ENCODE measurements at regions of chr2 and their contacts with region 1.

Region 1: DNA sequence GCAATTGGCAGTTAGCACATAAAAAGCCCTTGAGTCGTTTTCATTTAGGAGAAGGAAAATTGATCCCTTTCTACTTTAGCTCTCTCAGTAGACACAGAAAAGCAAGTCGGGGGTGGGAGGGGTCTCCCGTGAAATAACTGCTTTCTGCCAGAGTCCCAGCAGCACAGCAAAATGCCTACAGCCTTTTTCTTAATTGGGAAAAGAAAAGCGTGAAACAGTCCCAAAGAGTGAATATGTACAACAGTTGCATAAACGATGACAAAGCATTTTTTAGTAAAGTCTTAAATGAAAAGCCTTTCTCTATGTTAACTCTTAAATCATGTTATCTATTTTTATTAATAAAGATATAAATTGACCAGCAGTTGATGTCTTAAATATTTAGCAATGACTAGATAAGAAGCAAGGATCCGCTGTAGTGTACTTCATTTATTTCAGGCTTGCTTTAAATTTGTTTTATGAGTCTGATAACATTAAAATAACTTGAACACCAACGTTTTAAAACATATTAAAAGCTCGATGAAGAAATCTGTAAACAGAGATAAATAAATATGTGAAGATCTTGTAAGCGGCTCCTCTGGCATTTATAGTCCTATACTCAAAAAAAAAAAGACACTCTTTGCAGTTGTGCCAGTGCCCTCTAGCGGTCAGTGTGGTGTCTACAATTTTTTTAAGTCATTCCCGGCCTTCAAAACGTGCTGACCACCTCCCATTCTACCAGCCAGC is 42.3 kb upstream of the ATIC start:
- DNase-seq: peak in 8 of 9 donors; percentile 21 to 59 (median 38)
- ATAC-seq: peak; percentile 81
- H3K4me3 ChIP-seq: no peak overlapping the region
- H3K4me3 Mint-ChIP-seq: no peak overlapping the region
- H3K27ac ChIP-seq: no peak overlapping the region
- H3K27ac Mint-ChIP-seq: no peak overlapping the region
- H3K4me1 ChIP-seq: no peaks in the 10 kb centered on the region
- H3K4me1 Mint-ChIP-seq: peaks cover 0 to 4% (median 0%) of the 10 kb centered on the region in 7 donors
- H3K27me3 ChIP-seq: no peaks in the 10 kb centered on the region
- H3K27me3 Mint-ChIP-seq: peaks cover 0 to 6% (median 3%) of the 10 kb centered on the region in 5 donors

Region 2: GRCh38 chr2:213806125-213806726 is 1463.3 kb before region 1 on chr2:
- CTCF ChIA-PET with region 1: no interaction called
- POLR2A ChIA-PET with region 1: no interaction called
- intact Hi-C with region 1: loop called in 1 of 2 experiments (anchors 2 kb)
- DNase-seq: no peak
- ATAC-seq: no peak
- H3K4me3 ChIP-seq: no peak overlapping the region
- H3K4me3 Mint-ChIP-seq: no peak overlapping the region
- H3K27ac ChIP-seq: no peak overlapping the region
- H3K27ac Mint-ChIP-seq: no peak overlapping the region
- H3K4me1 ChIP-seq: no peaks in the 10 kb centered on the region
- H3K4me1 Mint-ChIP-seq: no peaks in the 10 kb centered on the region
- H3K27me3 ChIP-seq: no peaks in the 10 kb centered on the region
- H3K27me3 Mint-ChIP-seq: peaks cover 0 to 7% (median 0%) of the 10 kb centered on the region in 5 donors

Region 3: GRCh38 chr2:215249501-215249900 is 20.1 kb before region 1 on chr2:
- CTCF ChIA-PET with region 1: no interaction called
- POLR2A ChIA-PET with region 1: no interaction called
- intact Hi-C with region 1: no loop called
- DNase-seq: no peak
- ATAC-seq: no peak
- H3K4me3 ChIP-seq: no peak overlapping the region
- H3K4me3 Mint-ChIP-seq: no peak overlapping the region
- H3K27ac ChIP-seq: no peak overlapping the region
- H3K27ac Mint-ChIP-seq: no peak overlapping the region
- H3K4me1 ChIP-seq: no peaks in the 10 kb centered on the region
- H3K4me1 Mint-ChIP-seq: no peaks in the 10 kb centered on the region
- H3K27me3 ChIP-seq: no peaks in the 10 kb centered on the region
- H3K27me3 Mint-ChIP-seq: peaks cover 0 to 21% (median 18%) of the 10 kb centered on the region in 5 donors

Region 4: DNA sequence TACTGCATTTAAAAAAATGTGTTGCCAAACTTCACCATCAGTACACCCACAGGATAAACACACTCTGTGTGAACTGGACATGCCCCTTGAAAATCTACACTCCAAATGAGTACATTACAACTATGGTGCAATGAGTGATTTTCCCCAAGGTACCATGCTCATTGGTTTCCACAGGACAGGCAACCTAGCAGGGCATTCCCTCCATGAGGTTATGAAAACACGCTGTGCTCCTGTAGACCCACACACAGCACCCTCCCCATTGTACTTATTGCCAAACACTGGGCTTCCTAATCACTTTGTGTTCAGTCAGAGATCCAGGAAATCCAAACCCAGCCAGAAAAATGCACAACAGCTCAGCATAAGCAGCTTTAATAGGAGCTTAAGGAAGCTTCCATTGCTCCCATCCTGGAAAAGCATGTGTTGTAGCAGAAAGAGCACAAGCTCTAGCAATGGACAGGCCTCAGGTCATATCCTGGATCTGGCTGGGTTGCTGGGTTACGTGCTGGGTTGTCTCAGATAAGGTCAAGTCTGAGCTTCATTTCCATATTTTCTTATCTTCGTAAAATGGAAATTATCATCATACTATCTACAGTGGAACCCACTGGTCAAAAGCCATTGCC is 21.5 kb after region 1 on chr2:
- CTCF ChIA-PET with region 1: no interaction called
- POLR2A ChIA-PET with region 1: no interaction called
- intact Hi-C with region 1: no loop called
- DNase-seq: no peak
- ATAC-seq: no peak
- H3K4me3 ChIP-seq: no peak overlapping the region
- H3K4me3 Mint-ChIP-seq: no peak overlapping the region
- H3K27ac ChIP-seq: no peak overlapping the region
- H3K27ac Mint-ChIP-seq: no peak overlapping the region
- H3K4me1 ChIP-seq: no peaks in the 10 kb centered on the region
- H3K4me1 Mint-ChIP-seq: peaks cover 0 to 6% (median 0%) of the 10 kb centered on the region in 7 donors
- H3K27me3 ChIP-seq: no peaks in the 10 kb centered on the region
- H3K27me3 Mint-ChIP-seq: peaks cover 0 to 11% (median 5%) of the 10 kb centered on the region in 5 donors

Region 5: DNA sequence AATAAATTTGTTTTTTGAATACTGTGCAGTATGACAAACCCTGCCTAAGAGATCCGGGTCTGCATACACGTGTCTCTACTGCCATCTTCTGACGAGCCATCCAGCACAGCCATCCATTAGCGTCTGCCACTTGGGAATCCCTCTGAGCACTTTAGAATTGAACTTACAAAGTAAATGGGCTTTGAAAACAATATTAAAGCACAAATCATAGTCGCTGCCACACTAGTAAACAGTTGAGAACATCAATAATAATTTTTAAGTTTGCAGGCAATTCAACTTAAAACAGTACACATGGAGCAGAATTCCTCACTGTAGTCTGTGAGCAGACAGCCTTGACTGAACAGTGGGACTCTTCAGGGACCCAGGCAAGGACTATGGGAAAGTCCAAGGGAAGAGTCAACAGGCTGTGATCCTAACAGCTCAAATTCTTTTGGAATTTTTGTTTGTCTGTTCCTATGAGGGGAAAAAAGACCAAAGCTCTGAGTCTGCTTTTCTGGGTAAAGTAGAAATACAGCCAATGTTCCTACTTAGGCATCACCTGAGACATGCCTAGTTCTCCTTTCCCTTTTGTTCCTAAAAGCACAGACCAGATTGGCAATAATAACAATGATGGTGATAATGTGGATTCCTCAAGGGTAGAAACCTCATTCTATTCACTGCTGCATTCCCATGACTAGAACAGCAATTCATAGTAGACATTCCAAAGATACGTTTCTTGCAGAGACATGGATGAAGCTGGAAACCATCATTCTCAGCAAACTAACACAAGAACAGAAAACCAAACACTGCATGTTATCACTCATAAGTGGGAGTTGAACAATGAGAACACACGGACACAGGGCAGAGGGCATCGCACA is 650.9 kb after region 1 on chr2:
- CTCF ChIA-PET with region 1: interaction called, 3 read pairs
- POLR2A ChIA-PET with region 1: no interaction called
- intact Hi-C with region 1: loop called (anchors 1 kb)
- DNase-seq: peak; percentile 19 to 62 (median 45)
- ATAC-seq: peak; percentile 88
- H3K4me3 ChIP-seq: no peak overlapping the region
- H3K4me3 Mint-ChIP-seq: no peak overlapping the region
- H3K27ac ChIP-seq: no peak overlapping the region
- H3K27ac Mint-ChIP-seq: no peak overlapping the region
- H3K4me1 ChIP-seq: no peaks in the 10 kb centered on the region
- H3K4me1 Mint-ChIP-seq: peaks cover 0 to 5% (median 0%) of the 10 kb centered on the region in 7 donors
- H3K27me3 ChIP-seq: no peaks in the 10 kb centered on the region
- H3K27me3 Mint-ChIP-seq: peaks cover 0 to 14% (median 7%) of the 10 kb centered on the region in 5 donors

Region 6: GRCh38 chr2:215931256-215931903 is 661.8 kb after region 1 on chr2:
- CTCF ChIA-PET with region 1: no interaction called
- POLR2A ChIA-PET with region 1: no interaction called
- intact Hi-C with region 1: loop called in 1 of 2 experiments (anchors 1 kb)
- DNase-seq: peak; percentile 9 to 53 (median 38)
- ATAC-seq: peak; percentile 66
- H3K4me3 ChIP-seq: no peak overlapping the region
- H3K4me3 Mint-ChIP-seq: no peak overlapping the region
- H3K27ac ChIP-seq: no peak overlapping the region
- H3K27ac Mint-ChIP-seq: no peak overlapping the region
- H3K4me1 ChIP-seq: no peaks in the 10 kb centered on the region
- H3K4me1 Mint-ChIP-seq: peaks cover 0 to 6% (median 0%) of the 10 kb centered on the region in 7 donors
- H3K27me3 ChIP-seq: no peaks in the 10 kb centered on the region
- H3K27me3 Mint-ChIP-seq: peaks cover 0 to 10% (median 0%) of the 10 kb centered on the region in 5 donors